ENCODE measurements at regions of chr3 and their contacts with region 1.

Region 1: DNA sequence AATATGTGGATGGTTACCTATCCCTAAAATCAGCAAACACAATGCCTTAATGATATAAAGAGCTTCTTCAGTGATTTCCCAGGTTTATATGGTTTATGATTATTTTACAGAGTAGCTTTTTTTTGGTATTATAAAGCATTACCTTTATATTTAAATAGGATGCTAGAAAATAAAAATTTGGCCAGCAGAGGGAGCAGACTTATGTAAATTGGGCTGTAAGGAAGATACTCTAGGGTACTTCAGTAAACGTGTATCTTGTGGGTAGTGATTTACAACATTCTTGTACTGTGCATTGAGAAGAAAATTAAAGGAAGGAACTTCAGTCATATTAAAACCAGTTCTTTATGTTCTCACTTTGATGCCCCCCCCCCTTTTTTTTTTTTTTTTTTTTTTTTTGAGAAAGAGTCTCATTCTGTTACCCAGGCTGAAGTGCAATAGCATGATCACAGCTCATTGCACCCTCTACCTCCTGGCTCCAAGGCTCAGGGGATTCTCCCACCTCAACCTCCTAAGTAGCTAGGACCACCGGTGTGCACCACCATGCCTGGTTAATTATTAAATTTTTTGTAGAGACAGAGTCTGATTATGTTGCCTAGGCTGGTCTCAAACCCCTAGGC is 167.9 kb downstream of the BBX start:
- DNase-seq: no peak
- ATAC-seq: peak; percentile 52
- H3K4me3 Mint-ChIP-seq: no peak overlapping the region
- H3K27ac Mint-ChIP-seq: no peak overlapping the region
- H3K4me1 Mint-ChIP-seq: peaks cover 1% of the 10 kb centered on the region
- H3K27me3 Mint-ChIP-seq: no peaks in the 10 kb centered on the region

Region 2: DNA sequence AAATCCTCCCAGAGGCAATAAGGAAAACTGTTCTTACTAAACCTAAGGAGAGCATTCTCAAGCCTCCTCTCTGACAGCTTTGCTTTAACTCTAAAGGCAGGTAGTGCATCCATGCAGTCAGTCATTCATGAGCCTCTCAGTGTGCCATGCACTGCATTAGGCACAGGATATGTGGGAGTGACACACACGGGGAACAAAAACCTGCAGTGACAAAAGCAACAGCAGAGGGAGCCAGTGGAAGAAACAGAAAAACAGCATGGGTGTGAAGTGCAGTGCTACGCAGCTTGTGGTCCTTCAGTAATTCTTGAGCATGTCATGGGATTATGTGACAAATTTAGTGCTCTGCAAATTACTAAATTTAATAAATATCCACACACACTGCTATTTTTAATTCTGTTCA is 62.9 kb after region 1 on chr3:
- POLR2A ChIA-PET with region 1: interaction called, 12 read pairs
- DNase-seq: no peak
- ATAC-seq: peak; percentile 52
- H3K4me3 Mint-ChIP-seq: no peak overlapping the region
- H3K27ac Mint-ChIP-seq: no peak overlapping the region
- H3K4me1 Mint-ChIP-seq: no peaks in the 10 kb centered on the region
- H3K27me3 Mint-ChIP-seq: no peaks in the 10 kb centered on the region

Region 3: GRCh38 chr3:108221911-108222852 is 531.6 kb after region 1 on chr3 and contains the start of gene IFT57:
- POLR2A ChIA-PET with region 1: no interaction called
- DNase-seq: peak; percentile 95
- ATAC-seq: peak; percentile 92
- H3K4me3 Mint-ChIP-seq: peak within 1 kb of the TSS; percentile 95
- H3K27ac Mint-ChIP-seq: peak within 1 kb of the TSS; percentile 98
- H3K4me1 Mint-ChIP-seq: peaks cover 34% of the 10 kb centered on the region
- H3K27me3 Mint-ChIP-seq: no peaks in the 10 kb centered on the region
- total RNA-seq, gene IFT57: 22.0 to 26.9 TPM